Mammary epithelial cell (primary cell): ENCODE measurements at regions of chr9 and their contacts with region 1.

Region 1: GRCh38 chr9:33852216-33852826 is 35.4 kb downstream of the UBE2R2 start:
- DNase-seq: peak; percentile 41
- H3K4me3 ChIP-seq: no peak overlapping the region
- H3K27ac ChIP-seq: no peak overlapping the region
- H3K4me1 ChIP-seq: no peaks in the 10 kb centered on the region
- H3K27me3 ChIP-seq: no peaks in the 10 kb centered on the region
- CTCF ChIP-seq: peak; percentile 41 to 74

Region 2: GRCh38 chr9:33415501-33416038 is 436.8 kb before region 1 on chr9:
- CTCF ChIA-PET with region 1: no interaction called
- dilution Hi-C with region 1: no loop called
- in situ Hi-C with region 1: no loop called
- intact Hi-C with region 1: no loop called
- DNase-seq: peak; percentile 76
- H3K4me3 ChIP-seq: no peak overlapping the region
- H3K27ac ChIP-seq: no peak overlapping the region
- H3K4me1 ChIP-seq: peaks cover 44% of the 10 kb centered on the region
- H3K27me3 ChIP-seq: no peaks in the 10 kb centered on the region
- CTCF ChIP-seq: peak; percentile 67 to 75

Region 3: GRCh38 chr9:33623658-33624586 is 228.4 kb before region 1 on chr9:
- CTCF ChIA-PET with region 1: no interaction called
- dilution Hi-C with region 1: no loop called
- in situ Hi-C with region 1: no loop called
- intact Hi-C with region 1: loop called (anchors 10 kb)
- DNase-seq: peak; percentile 74
- H3K4me3 ChIP-seq: no peak overlapping the region
- H3K27ac ChIP-seq: no peak overlapping the region
- H3K4me1 ChIP-seq: peaks cover 29% of the 10 kb centered on the region
- H3K27me3 ChIP-seq: no peaks in the 10 kb centered on the region
- CTCF ChIP-seq: peak; percentile 77 to 84

Region 4: GRCh38 chr9:33737811-33738606 is 114.3 kb before region 1 on chr9:
- CTCF ChIA-PET with region 1: no interaction called
- dilution Hi-C with region 1: no loop called
- in situ Hi-C with region 1: loop called (anchors 10 kb)
- intact Hi-C with region 1: loop called (anchors 1 kb)
- DNase-seq: peak; percentile 60
- H3K4me3 ChIP-seq: no peak overlapping the region
- H3K27ac ChIP-seq: no peak overlapping the region
- H3K4me1 ChIP-seq: peaks cover 10% of the 10 kb centered on the region
- H3K27me3 ChIP-seq: no peaks in the 10 kb centered on the region
- CTCF ChIP-seq: peak; percentile 74 to 89

Region 5: GRCh38 chr9:33785913-33786312 is 66.4 kb before region 1 on chr9:
- CTCF ChIA-PET with region 1: no interaction called
- dilution Hi-C with region 1: no loop called
- in situ Hi-C with region 1: no loop called
- intact Hi-C with region 1: loop called (anchors 2 kb)
- DNase-seq: no peak
- H3K4me3 ChIP-seq: no peak overlapping the region
- H3K27ac ChIP-seq: no peak overlapping the region
- H3K4me1 ChIP-seq: peaks cover 14% of the 10 kb centered on the region
- H3K27me3 ChIP-seq: no peaks in the 10 kb centered on the region
- CTCF ChIP-seq: no peak

Region 6: GRCh38 chr9:33800886-33801285 is 51.4 kb before region 1 on chr9:
- CTCF ChIA-PET with region 1: no interaction called
- dilution Hi-C with region 1: no loop called
- in situ Hi-C with region 1: loop called in 1 of 2 experiments (anchors 5 kb)
- intact Hi-C with region 1: no loop called
- DNase-seq: no peak
- H3K4me3 ChIP-seq: no peak overlapping the region
- H3K27ac ChIP-seq: no peak overlapping the region
- H3K4me1 ChIP-seq: no peaks in the 10 kb centered on the region
- H3K27me3 ChIP-seq: no peaks in the 10 kb centered on the region
- CTCF ChIP-seq: no peak